ENCODE measurements at regions of chr20 and their contacts with region 1.

Region 1: DNA sequence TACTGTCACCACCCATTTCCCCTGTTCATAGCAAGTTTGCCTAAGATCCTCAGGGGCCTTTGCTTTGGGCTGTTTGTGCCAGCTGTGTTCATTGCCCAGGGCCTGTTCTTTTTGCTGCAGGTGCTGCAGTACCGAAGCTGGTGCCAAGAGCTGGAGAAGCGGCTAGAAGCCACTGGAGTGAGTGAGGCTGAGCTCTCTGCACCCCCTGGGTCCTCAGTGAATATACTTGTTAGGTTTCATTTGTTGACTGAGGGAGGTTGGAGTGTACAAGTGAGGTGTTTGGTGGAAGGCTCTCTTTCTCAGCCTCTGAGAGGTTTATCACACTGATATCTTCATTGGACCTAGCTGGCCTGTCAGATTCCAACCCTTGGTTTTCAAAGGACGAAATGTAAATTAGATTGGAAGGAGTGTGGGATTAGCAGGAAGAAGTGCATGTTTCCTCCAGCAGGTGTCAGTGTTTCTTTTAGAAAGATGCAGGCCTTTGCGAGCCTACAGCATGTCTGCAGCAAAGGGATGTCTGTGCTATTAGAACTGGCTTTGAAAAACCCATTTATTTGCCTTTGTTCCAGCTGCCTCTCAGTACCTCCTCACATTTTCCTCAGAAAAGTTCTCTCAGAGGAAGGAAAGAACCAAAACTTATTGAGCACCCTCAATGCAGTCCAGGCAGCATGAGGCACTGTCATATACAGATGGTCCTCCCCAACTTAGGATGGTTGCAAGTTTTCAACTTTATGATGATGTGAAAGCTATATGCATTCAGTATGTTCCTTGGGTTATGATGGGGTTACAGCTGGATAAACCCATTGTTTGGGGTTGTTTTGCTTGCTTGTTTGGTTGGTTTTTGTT is 8.3 kb downstream of the CEP250 start:
- DNase-seq: peak; percentile 14 to 35
- ATAC-seq: peak; percentile 69 to 72
- H3K4me3 ChIP-seq: no peak overlapping the region
- H3K27ac ChIP-seq: peak overlapping the region in 1 of 4 donors; percentile 19
- H3K4me1 ChIP-seq: peaks cover 13 to 25% of the 10 kb centered on the region in 2 donors
- H3K27me3 ChIP-seq: no peaks in the 10 kb centered on the region
- CTCF ChIP-seq: peak; percentile 60 to 77 (median 72)
- POLR2A ChIP-seq: no peak

Region 2: GRCh38 chr20:35404614-35405259 is 58.9 kb before region 1 on chr20:
- in situ Hi-C with region 1: no loop called
- intact Hi-C with region 1: no loop called
- DNase-seq: no peak
- ATAC-seq: no peak
- H3K4me3 ChIP-seq: no peak overlapping the region
- H3K27ac ChIP-seq: no peak overlapping the region
- H3K4me1 ChIP-seq: no peaks in the 10 kb centered on the region
- H3K27me3 ChIP-seq: no peaks in the 10 kb centered on the region
- CTCF ChIP-seq: no peak
- POLR2A ChIP-seq: no peak

Region 3: DNA sequence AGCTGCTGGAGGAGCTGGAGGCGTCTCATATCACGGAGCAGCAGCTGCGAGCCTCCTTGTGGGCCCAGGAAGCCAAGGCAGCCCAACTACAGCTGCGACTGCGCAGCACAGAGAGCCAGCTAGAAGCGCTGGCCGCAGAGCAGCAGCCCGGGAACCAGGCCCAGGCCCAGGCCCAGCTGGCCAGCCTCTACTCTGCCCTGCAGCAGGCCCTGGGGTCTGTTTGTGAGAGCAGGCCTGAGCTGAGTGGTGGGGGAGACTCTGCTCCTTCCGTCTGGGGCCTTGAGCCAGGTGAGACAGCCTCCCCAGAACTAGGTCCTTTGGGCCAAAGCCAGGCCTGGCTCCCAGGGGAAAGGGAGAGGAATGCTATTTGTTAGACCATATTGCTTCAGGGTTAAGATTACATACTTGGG is 34.1 kb after region 1 on chr20:
- in situ Hi-C with region 1: no loop called
- intact Hi-C with region 1: loop called (anchors 1 kb)
- DNase-seq: peak; percentile 64 to 91
- ATAC-seq: peak; percentile 90 to 98
- H3K4me3 ChIP-seq: no peak overlapping the region
- H3K27ac ChIP-seq: peak overlapping the region; percentile 65 to 83 (median 78)
- H3K4me1 ChIP-seq: peaks cover 36% of the 10 kb centered on the region in 2 donors
- H3K27me3 ChIP-seq: no peaks in the 10 kb centered on the region
- CTCF ChIP-seq: peak; percentile 14 to 49 (median 36)
- POLR2A ChIP-seq: no peak

Region 4: GRCh38 chr20:35541783-35542588 is 78.3 kb after region 1 on chr20 and contains the start of gene ERGIC3:
- in situ Hi-C with region 1: no loop called
- intact Hi-C with region 1: loop called (anchors 2 kb)
- DNase-seq: peak; percentile 94 to 96
- ATAC-seq: peak; percentile 99
- H3K4me3 ChIP-seq: peak within 1 kb of the TSS; percentile 69 to 88 (median 82)
- H3K27ac ChIP-seq: peak within 1 kb of the TSS; percentile 65 to 85 (median 77)
- H3K4me1 ChIP-seq: peaks cover 0 to 12% of the 10 kb centered on the region in 2 donors
- H3K27me3 ChIP-seq: no peaks in the 10 kb centered on the region
- CTCF ChIP-seq: peak in 1 of 5 experiments; percentile 26
- POLR2A ChIP-seq: peak in 1 of 2 donors; percentile 29
- total RNA-seq, gene ERGIC3: 82.5 to 91.0 (median 89.2) TPM

Region 5: DNA sequence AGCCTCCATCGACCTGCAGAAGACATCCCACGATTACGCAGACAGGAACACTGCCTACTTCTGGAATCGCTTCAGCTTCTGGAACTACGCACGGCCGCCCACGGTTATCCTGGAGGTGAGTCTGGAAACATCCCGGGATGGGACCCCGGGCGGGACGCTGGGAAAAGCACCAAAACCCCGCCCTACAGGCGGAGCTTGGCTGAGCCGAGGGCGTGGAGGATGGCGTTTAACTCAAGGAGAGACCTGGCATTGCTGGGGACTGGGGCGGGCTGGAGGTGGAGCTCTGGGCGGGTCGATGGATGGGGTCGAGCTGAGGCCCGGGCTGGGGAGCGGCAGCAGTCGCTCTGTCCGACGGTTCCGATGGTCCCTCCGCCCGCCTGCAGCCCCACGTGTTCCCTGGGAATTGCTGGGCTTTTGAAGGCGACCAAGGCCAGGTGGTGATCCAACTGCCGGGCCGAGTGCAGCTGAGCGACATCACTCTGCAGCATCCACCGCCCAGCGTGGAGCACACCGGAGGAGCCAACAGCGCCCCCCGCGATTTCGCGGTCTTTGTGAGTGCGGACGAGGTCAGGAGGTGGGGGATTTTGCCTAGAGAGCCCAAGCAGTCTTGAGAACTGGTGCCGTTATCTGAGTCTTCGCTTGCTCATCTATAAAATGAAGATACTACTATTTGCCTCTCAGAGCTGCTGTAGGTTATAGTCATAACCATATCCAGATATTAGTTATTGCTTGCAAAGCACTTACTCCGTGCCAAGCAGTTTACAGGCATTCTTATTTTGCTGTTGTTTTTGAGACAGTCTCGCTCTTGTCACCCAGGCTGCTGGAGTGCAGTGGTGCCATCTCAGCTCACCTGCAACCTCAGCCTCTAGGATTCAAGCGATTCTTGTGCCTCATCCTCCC is 155.8 kb after region 1 on chr20:
- in situ Hi-C with region 1: no loop called
- intact Hi-C with region 1: loop called (anchors 10 kb)
- DNase-seq: peak; percentile 27 to 42
- ATAC-seq: no peak
- H3K4me3 ChIP-seq: peak overlapping the region; percentile 46 to 71 (median 71)
- H3K27ac ChIP-seq: peak overlapping the region in 3 of 4 donors; percentile 24 to 86 (median 85)
- H3K4me1 ChIP-seq: peaks cover 18 to 32% of the 10 kb centered on the region in 2 donors
- H3K27me3 ChIP-seq: no peaks in the 10 kb centered on the region
- CTCF ChIP-seq: peak in 1 of 5 experiments; percentile 35
- POLR2A ChIP-seq: peak in 1 of 2 donors; percentile 38